ENCODE measurements at regions of chr19 and their contacts with region 1.

Region 1: GRCh38 chr19:42401365-42402303 is 11.5 kb upstream of the CNFN start:
- DNase-seq: peak; percentile 61 to 83 (median 70)
- H3K4me3 ChIP-seq: peak overlapping the region; percentile 59
- H3K4me3 Mint-ChIP-seq: peak overlapping the region; percentile 81 to 92 (median 84)
- H3K27ac ChIP-seq: peak overlapping the region; percentile 38
- H3K27ac Mint-ChIP-seq: peak overlapping the region; percentile 22 to 89 (median 81)
- H3K4me1 ChIP-seq: peaks cover 19% of the 10 kb centered on the region
- H3K4me1 Mint-ChIP-seq: peaks cover 32 to 50% (median 39%) of the 10 kb centered on the region in 3 donors
- H3K27me3 ChIP-seq: no peaks in the 10 kb centered on the region
- H3K27me3 Mint-ChIP-seq: no peaks in the 10 kb centered on the region

Region 2: GRCh38 chr19:42386974-42387707 is 14.5 kb before region 1 on chr19:
- CTCF ChIA-PET with region 1: interaction called, 11 read pairs
- POLR2A ChIA-PET with region 1: no interaction called
- DNase-seq: peak; percentile 47 to 68 (median 56)
- H3K4me3 ChIP-seq: no peak overlapping the region
- H3K4me3 Mint-ChIP-seq: peak overlapping the region; percentile 26 to 79 (median 50)
- H3K27ac ChIP-seq: no peak overlapping the region
- H3K27ac Mint-ChIP-seq: peak overlapping the region in 2 of 8 donors; percentile 3 to 70
- H3K4me1 ChIP-seq: peaks cover 6% of the 10 kb centered on the region
- H3K4me1 Mint-ChIP-seq: peaks cover 5 to 7% (median 6%) of the 10 kb centered on the region in 3 donors
- H3K27me3 ChIP-seq: peaks cover 4% of the 10 kb centered on the region
- H3K27me3 Mint-ChIP-seq: peaks cover 30 to 50% of the 10 kb centered on the region in 2 donors